Panc1 (cell line): ENCODE measurements at regions of chr14 and their contacts with region 1.

Region 1: DNA sequence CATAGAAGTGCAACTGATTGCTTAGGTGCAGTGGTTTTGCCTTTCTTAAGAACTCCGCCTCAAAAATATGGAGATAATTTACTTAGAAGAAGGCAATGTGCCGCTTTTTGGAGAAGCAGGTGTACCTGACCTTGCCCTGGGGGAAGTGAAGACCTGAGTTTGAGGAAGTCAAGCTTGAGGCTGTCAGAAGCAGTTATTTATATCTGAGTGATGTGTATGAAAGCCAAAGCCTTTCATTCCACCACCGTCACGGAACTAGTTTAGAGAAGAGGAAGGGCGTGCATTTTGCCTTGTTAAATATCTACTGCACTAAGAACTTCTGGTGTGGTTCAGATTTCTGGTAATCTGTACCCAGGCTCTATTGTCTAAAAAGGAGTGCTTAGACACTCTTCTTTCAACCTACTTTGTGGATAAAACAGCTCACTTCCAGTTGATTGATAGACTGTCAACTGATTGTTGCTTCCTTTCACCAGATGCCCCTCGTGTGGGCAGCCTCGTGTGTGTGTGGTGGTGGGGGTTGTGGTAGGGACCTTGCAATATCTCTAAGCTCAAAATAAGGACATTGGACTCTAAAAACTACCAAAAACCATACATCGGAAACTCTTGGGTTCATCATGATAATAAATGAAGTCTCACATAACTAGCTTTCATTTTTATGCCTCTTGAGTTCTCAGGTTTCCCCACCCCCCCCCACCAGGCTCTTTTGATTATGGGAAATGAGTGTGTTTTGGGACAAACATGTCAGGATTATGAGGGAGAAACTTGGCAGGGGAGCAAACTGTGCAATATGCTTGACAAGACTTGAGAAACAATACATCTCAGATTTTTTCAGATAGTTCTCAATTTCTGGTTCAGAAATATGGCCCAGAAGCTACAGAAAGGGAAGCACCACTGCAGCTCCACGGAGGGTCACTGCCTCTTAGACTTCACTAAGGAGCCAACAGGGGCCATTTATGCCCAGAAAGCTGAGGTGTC is 78.6 kb downstream of the ARF6 start:
- DNase-seq: no peak
- ATAC-seq: peak; percentile 23; the same call in 1 of the 2 replicates
- H3K4me3 ChIP-seq: peak overlapping the region; percentile 2 to 28; a peak in 3 of 4 replicates
- H3K27ac ChIP-seq: peak overlapping the region; percentile 100
- H3K4me1 ChIP-seq: peaks cover 76% of the 10 kb centered on the region
- H3K27me3 ChIP-seq: no peaks in the 10 kb centered on the region
- CTCF ChIP-seq: no peak

Region 2: GRCh38 chr14:49767562-49768300 is 203.7 kb before region 1 on chr14 and contains the start of gene KLHDC2:
- CTCF ChIA-PET with region 1: no interaction called
- POLR2A ChIA-PET with region 1: interaction called, 13 read pairs
- in situ Hi-C with region 1: no loop called
- intact Hi-C with region 1: no loop called
- DNase-seq: no peak
- ATAC-seq: peak; percentile 91
- H3K4me3 ChIP-seq: peak within 1 kb of the TSS; percentile 81 to 84
- H3K27ac ChIP-seq: peak within 1 kb of the TSS; percentile 91
- H3K4me1 ChIP-seq: peaks cover 22% of the 10 kb centered on the region
- H3K27me3 ChIP-seq: no peaks in the 10 kb centered on the region
- CTCF ChIP-seq: peak; percentile 84
- total RNA-seq, gene KLHDC2: 24.5 TPM

Region 3: GRCh38 chr14:49892636-49893308 is 78.7 kb before region 1 on chr14 and contains the start of gene ARF6:
- CTCF ChIA-PET with region 1: no interaction called
- POLR2A ChIA-PET with region 1: no interaction called
- in situ Hi-C with region 1: no loop called
- intact Hi-C with region 1: loop called (anchors 10 kb)
- DNase-seq: no peak
- ATAC-seq: peak; percentile 92
- H3K4me3 ChIP-seq: peak within 1 kb of the TSS; percentile 75 to 80
- H3K27ac ChIP-seq: peak within 1 kb of the TSS; percentile 97
- H3K4me1 ChIP-seq: no peaks in the 10 kb centered on the region; the same call in 1 of the 2 replicates
- H3K27me3 ChIP-seq: no peaks in the 10 kb centered on the region
- CTCF ChIP-seq: no peak; the same call in 1 of the 2 replicates
- total RNA-seq, gene ARF6: 63.2 TPM

Region 4: GRCh38 chr14:50003213-50004031 is 32.0 kb after region 1 on chr14:
- CTCF ChIA-PET with region 1: interaction called, 4 read pairs
- POLR2A ChIA-PET with region 1: interaction called, 5 read pairs
- in situ Hi-C with region 1: no loop called
- intact Hi-C with region 1: loop called (anchors 1 kb)
- DNase-seq: no peak
- ATAC-seq: peak; percentile 52
- H3K4me3 ChIP-seq: peak overlapping the region; percentile 44 to 54
- H3K27ac ChIP-seq: peak overlapping the region; percentile 100
- H3K4me1 ChIP-seq: peaks cover 69% of the 10 kb centered on the region
- H3K27me3 ChIP-seq: no peaks in the 10 kb centered on the region
- CTCF ChIP-seq: no peak

Region 5: DNA sequence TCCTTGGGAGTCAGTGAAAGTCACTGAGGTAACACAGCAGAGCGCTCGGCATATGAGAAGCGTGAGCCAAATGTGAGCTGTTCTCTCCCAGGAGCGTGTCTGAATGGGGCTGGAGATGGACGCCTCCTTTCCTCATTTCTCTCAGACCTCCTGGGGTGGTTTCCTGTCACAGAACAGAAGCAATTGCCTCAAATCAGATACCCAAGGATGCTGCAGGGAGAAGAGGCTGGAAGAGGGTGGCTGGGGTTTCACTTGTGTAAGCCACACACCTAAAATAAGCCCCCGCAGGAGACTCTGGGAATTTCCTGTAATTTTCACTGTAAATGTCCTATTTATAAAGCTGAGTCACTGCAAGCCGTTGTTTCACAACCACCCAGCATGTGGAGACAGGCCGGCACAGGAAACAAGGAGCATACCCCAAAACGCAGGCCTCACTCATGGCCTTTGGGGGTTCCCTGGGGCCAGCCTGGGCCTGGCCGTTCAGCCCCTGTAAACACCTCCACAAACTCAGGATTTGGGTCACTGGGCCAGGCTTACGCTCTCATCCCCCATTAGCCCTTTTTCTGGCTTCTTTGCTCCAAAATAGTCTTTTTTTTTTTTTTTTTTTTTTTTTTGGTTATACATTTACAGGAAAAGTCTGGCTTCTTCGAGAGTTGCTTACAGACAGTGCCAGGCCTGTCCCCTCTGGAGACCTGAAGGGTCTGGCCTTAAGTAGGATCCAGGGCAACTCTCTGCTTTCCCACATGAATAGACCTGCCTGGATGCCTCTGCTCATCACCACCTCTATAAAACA is 89.6 kb after region 1 on chr14:
- CTCF ChIA-PET with region 1: no interaction called
- POLR2A ChIA-PET with region 1: no interaction called
- in situ Hi-C with region 1: no loop called
- intact Hi-C with region 1: loop called (anchors 10 kb)
- DNase-seq: no peak
- ATAC-seq: peak; percentile 55
- H3K4me3 ChIP-seq: no peak overlapping the region
- H3K27ac ChIP-seq: peak overlapping the region; percentile 88
- H3K4me1 ChIP-seq: peaks cover 38% of the 10 kb centered on the region
- H3K27me3 ChIP-seq: no peaks in the 10 kb centered on the region
- CTCF ChIP-seq: no peak

Region 6: GRCh38 chr14:50109342-50109741 is 137.9 kb after region 1 on chr14:
- CTCF ChIA-PET with region 1: no interaction called
- POLR2A ChIA-PET with region 1: no interaction called
- in situ Hi-C with region 1: no loop called
- intact Hi-C with region 1: loop called (anchors 10 kb)
- DNase-seq: no peak
- ATAC-seq: no peak
- H3K4me3 ChIP-seq: no peak overlapping the region
- H3K27ac ChIP-seq: no peak overlapping the region
- H3K4me1 ChIP-seq: no peaks in the 10 kb centered on the region; the same call in 1 of the 2 replicates
- H3K27me3 ChIP-seq: no peaks in the 10 kb centered on the region
- CTCF ChIP-seq: peak; percentile 37; the same call in 1 of the 2 replicates

Region 7: GRCh38 chr14:50139192-50139591 is 167.7 kb after region 1 on chr14:
- CTCF ChIA-PET with region 1: no interaction called
- POLR2A ChIA-PET with region 1: no interaction called
- in situ Hi-C with region 1: no loop called
- intact Hi-C with region 1: no loop called
- DNase-seq: no peak
- ATAC-seq: no peak
- H3K4me3 ChIP-seq: no peak overlapping the region
- H3K27ac ChIP-seq: no peak overlapping the region
- H3K4me1 ChIP-seq: no peaks in the 10 kb centered on the region
- H3K27me3 ChIP-seq: no peaks in the 10 kb centered on the region
- CTCF ChIP-seq: no peak